MCF 10A (cell line): ENCODE measurements at regions of chr1 and their contacts with region 1.

Region 1: GRCh38 chr1:111030590-111030989 is 66.9 kb upstream of the LRIF1 start:
- DNase-seq: peak; percentile 78
- H3K4me3 Mint-ChIP-seq: no peak overlapping the region
- H3K27ac Mint-ChIP-seq: no peak overlapping the region
- H3K4me1 Mint-ChIP-seq: peaks cover 5% of the 10 kb centered on the region
- H3K27me3 Mint-ChIP-seq: peaks cover 24% of the 10 kb centered on the region
- CTCF ChIP-seq: peak; percentile 80

Region 2: GRCh38 chr1:111015225-111015624 is 15.4 kb before region 1 on chr1:
- CTCF ChIA-PET with region 1: interaction called, 18 read pairs
- POLR2A ChIA-PET with region 1: interaction called, 3 read pairs
- intact Hi-C with region 1: no loop called
- DNase-seq: no peak
- H3K4me3 Mint-ChIP-seq: no peak overlapping the region
- H3K27ac Mint-ChIP-seq: no peak overlapping the region
- H3K4me1 Mint-ChIP-seq: no peaks in the 10 kb centered on the region
- H3K27me3 Mint-ChIP-seq: no peaks in the 10 kb centered on the region
- CTCF ChIP-seq: no peak

Region 3: GRCh38 chr1:111045033-111045722 is 14.6 kb after region 1 on chr1:
- CTCF ChIA-PET with region 1: interaction called, 18 read pairs
- POLR2A ChIA-PET with region 1: no interaction called
- intact Hi-C with region 1: no loop called
- DNase-seq: no peak
- H3K4me3 Mint-ChIP-seq: no peak overlapping the region
- H3K27ac Mint-ChIP-seq: no peak overlapping the region
- H3K4me1 Mint-ChIP-seq: no peaks in the 10 kb centered on the region
- H3K27me3 Mint-ChIP-seq: no peaks in the 10 kb centered on the region
- CTCF ChIP-seq: no peak

Region 4: DNA sequence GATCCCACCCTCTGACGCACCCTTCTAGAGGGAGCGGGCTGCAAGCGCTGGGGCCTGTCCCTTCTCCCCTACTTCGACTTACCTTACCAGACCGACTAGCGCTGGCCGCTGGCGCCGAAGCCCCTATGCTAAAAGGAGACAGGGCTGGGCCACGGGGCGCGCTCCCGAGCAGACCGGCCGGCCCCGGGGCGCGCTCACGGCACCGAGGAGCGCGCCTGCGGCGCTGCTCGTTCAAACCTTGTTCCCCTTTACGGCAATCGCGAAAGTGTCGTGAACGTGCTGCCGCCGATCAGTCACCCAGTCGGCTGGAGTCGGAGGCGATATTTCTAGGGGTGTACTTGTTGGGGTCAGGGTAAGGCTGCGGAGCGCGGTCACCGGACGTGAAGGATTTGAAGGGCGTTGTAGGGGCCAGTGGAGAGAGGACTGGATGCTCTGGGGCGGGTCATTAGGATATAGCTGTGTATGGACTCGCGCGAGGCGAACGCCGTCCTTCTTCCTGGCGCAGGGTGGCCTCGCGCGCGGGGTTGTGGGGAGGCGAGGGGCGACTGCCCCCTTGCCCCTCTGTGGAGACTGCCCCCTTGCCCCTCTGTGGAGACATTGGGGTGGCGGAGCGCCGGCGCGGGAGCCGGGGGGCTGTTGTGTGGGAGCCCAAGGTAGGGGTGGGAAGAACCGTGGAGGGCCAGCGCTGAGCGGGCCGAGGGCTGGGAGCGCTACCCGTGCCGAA is 109.5 kb after region 1 on chr1 and contains the starts of genes CEPT1 and DRAM2:
- CTCF ChIA-PET with region 1: interaction called, 12 read pairs
- POLR2A ChIA-PET with region 1: interaction called, 6 read pairs
- intact Hi-C with region 1: loop called (anchors 2 kb)
- DNase-seq: peak; percentile 94
- H3K4me3 Mint-ChIP-seq: peak within 1 kb of the TSS; percentile 94
- H3K27ac Mint-ChIP-seq: peak within 1 kb of the TSS; percentile 97
- H3K4me1 Mint-ChIP-seq: peaks cover 28% of the 10 kb centered on the region
- H3K27me3 Mint-ChIP-seq: no peaks in the 10 kb centered on the region
- CTCF ChIP-seq: no peak
- total RNA-seq, gene CEPT1: 43.1 and 45.0 TPM in 2 replicates
- total RNA-seq, gene DRAM2: 30.5 and 32.1 TPM in 2 replicates

Region 5: DNA sequence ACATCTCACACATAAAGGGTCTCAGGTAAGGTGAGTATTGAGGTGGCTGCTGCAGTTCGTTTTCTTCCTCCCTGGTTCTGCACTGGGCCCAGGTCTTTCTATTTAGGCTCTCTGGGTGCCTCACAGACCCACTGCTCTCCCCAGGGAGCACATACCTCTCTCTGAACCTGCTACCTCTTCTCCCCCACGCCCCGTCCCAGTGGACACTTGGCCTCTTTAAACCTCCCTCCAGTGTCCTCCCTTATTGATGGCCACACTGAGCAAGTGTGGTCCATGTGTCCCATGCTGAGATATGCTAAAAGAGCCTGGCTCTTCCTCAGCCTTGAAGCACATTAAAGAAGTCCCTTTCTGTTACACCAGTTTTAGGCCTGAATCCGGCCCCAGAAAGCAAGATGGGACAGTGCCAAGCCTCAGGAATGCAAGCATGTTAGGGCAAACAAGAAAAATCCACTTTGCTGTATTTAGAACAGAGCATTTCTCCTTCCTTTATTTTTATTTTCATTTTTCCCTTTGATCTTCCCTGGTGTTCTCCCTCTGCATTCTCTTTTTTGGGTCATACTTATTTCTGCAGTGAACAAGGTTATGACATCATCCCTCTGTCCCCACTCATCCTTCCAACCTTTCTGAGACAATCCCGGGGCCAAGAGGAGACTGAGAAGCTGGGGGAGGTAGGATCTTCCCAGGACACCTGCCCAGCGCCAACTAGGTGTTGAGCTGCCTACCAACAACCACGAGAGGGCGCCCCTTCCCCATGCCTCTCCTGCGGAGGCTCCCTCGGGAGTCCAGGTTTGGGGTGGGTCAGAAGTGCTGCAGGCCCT is 191.9 kb after region 1 on chr1:
- CTCF ChIA-PET with region 1: interaction called, 6 read pairs
- POLR2A ChIA-PET with region 1: no interaction called
- intact Hi-C with region 1: loop called (anchors 2 kb)
- DNase-seq: peak; percentile 81
- H3K4me3 Mint-ChIP-seq: no peak overlapping the region
- H3K27ac Mint-ChIP-seq: peak overlapping the region; percentile 36
- H3K4me1 Mint-ChIP-seq: peaks cover 31% of the 10 kb centered on the region
- H3K27me3 Mint-ChIP-seq: no peaks in the 10 kb centered on the region
- CTCF ChIP-seq: peak; percentile 93

Region 6: DNA sequence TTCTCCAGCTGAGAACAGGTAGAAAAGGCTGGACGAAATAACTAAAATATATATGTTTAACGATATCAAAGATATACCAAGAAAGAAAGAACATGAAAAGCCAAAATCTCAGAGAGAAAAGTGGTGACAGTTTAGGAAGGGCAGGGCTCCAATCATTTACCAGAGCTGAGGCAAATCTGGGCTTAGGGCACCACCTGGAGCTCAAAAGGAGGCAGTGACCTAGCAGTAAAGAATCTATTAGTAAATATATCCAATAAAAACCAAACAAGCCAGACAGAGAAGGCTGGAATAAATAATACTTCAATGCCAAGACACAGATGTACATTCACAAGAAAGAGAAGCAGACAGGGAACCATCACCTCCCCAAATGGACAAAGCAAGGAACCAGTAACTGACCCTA is 303.6 kb after region 1 on chr1:
- CTCF ChIA-PET with region 1: interaction called, 25 read pairs
- POLR2A ChIA-PET with region 1: no interaction called
- intact Hi-C with region 1: loop called (anchors 2 kb)
- DNase-seq: peak; percentile 59
- H3K4me3 Mint-ChIP-seq: no peak overlapping the region
- H3K27ac Mint-ChIP-seq: no peak overlapping the region
- H3K4me1 Mint-ChIP-seq: no peaks in the 10 kb centered on the region
- H3K27me3 Mint-ChIP-seq: no peaks in the 10 kb centered on the region
- CTCF ChIP-seq: peak; percentile 68